WTC11 (cell line): ENCODE measurements at regions of chr15 and their contacts with region 1.

Region 1: DNA sequence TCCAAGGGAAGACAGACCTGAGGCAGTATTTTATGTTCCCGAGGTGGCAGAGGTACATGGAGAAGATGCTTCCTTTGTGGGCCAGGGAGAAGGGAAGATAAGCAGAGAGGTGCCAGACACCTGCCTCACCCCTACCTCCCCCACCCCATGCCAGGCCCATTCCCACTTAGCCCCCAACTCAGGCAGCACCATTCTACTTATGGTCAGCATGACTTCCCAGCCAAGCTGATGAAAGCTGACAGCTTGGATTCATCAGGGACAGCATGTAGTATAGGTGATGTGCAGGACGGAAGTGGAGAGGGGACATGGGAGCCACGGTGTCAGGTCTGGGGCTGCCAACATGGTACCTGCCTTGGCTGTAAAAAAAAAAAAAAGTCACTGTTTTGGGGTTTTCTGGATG is 57.5 kb upstream of the CSPG4 start:
- DNase-seq: no peak
- ATAC-seq: no peak
- H3K4me3 Mint-ChIP-seq: no peak overlapping the region
- H3K27ac Mint-ChIP-seq: peak overlapping the region; percentile 68; the same call in 1 of the 2 replicates
- H3K4me1 Mint-ChIP-seq: peaks cover 46% of the 10 kb centered on the region
- H3K27me3 Mint-ChIP-seq: no peaks in the 10 kb centered on the region; the same call in 1 of the 2 replicates
- CTCF ChIP-seq: no peak

Region 2: DNA sequence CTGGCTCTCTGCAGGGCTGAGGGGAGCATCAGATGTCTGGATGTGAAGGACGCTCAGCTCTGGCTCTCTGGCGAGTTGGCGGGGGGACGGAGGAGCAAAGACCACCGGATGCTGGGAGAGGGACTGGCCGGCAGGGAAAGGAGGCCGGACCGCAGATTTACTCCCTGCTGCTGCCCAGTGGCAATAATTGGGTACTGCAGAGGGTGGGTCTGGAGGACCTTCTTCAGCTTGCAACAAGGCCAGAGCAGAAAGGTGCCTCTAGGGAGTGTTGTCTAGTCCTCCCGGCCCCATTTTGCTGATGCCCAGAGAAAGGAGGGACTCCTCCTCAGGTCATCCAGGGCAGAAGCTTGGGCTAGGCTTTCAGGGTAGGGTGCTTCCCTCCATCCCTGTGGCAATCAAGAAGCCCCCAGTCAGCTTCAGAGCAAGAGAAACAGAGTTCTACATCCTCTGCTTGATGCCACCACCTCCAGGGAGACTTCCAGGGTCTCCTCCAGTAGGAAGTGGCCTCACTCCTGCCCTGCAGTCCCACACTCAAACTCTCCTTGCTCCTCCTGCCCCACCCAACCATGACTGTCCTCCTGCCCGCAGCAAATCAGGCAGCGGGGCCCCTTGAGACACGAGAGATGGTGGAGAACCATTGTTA is 37.2 kb before region 1 on chr15:
- CTCF ChIA-PET with region 1: interaction called, 14 read pairs
- POLR2A ChIA-PET with region 1: no interaction called
- DNase-seq: peak; percentile 92
- ATAC-seq: peak; percentile 82
- H3K4me3 Mint-ChIP-seq: peak overlapping the region; percentile 20; the same call in 1 of the 2 replicates
- H3K27ac Mint-ChIP-seq: no peak overlapping the region
- H3K4me1 Mint-ChIP-seq: peaks cover 44% of the 10 kb centered on the region
- H3K27me3 Mint-ChIP-seq: peaks cover 2% of the 10 kb centered on the region; the same call in 1 of the 2 replicates
- CTCF ChIP-seq: peak; percentile 75

Region 3: GRCh38 chr15:75758071-75758872 is 11.9 kb before region 1 on chr15:
- CTCF ChIA-PET with region 1: no interaction called
- POLR2A ChIA-PET with region 1: no interaction called
- DNase-seq: peak; percentile 89
- ATAC-seq: peak; percentile 97
- H3K4me3 Mint-ChIP-seq: peak overlapping the region; percentile 78
- H3K27ac Mint-ChIP-seq: peak overlapping the region; percentile 93
- H3K4me1 Mint-ChIP-seq: peaks cover 25% of the 10 kb centered on the region
- H3K27me3 Mint-ChIP-seq: peaks cover 3% of the 10 kb centered on the region
- CTCF ChIP-seq: no peak

Region 4: GRCh38 chr15:75836953-75837321 is 66.8 kb after region 1 on chr15:
- CTCF ChIA-PET with region 1: no interaction called
- POLR2A ChIA-PET with region 1: no interaction called
- DNase-seq: no peak
- ATAC-seq: 0 out of 2 replicates have a peak, but pooled peaks have one; percentile 20
- H3K4me3 Mint-ChIP-seq: no peak overlapping the region
- H3K27ac Mint-ChIP-seq: no peak overlapping the region
- H3K4me1 Mint-ChIP-seq: peaks cover 12% of the 10 kb centered on the region
- H3K27me3 Mint-ChIP-seq: peaks cover 12% of the 10 kb centered on the region
- CTCF ChIP-seq: no peak